Dendritic cell treated with granulocyte-macrophage colony-stimulating factor and Interleukin-4, amounts not matched to agents 40 ng/mL and 50 ng/mL, for 4 days (primary cell): ENCODE measurements at regions of chr16 and their contacts with region 1.

Region 1: DNA sequence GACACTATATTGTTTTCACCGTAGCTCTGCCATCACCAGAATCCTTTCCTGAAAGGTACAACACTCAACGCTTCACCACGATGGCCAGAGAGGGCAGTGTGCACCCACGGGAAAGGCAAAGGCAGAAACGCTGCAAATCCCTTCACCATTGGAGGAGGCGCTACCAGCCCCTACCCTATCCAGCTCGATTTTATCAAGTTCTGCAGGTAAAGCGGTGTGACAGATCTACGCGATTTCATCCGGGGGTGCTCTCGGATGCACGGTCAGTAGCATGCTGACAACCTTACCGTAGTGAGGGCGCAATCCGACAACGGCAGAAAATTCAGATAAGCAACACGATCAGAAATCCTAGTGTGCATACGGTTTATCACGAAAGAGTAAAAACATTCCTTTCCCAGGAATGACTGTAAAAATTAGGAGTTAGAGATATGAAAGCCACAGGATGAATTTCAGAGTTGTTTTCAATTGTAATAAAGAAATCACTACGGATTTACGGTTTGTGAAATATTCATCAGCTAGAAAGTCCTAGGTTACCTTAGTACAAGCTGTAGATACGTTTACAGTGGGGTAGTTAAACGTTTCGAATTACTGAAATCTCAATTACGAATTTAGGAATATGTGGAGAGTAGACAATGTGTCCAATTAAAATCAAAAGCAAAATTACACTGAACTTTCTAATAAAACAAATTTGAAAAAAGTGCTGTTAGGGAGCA is 1.8 kb downstream of the NETO2 start:
- H3K4me3 Mint-ChIP-seq: peak overlapping the region; percentile 78
- H3K27ac Mint-ChIP-seq: peak overlapping the region; percentile 78
- H3K4me1 Mint-ChIP-seq: peaks cover 37% of the 10 kb centered on the region
- H3K27me3 Mint-ChIP-seq: peaks cover 21% of the 10 kb centered on the region

Region 2: DNA sequence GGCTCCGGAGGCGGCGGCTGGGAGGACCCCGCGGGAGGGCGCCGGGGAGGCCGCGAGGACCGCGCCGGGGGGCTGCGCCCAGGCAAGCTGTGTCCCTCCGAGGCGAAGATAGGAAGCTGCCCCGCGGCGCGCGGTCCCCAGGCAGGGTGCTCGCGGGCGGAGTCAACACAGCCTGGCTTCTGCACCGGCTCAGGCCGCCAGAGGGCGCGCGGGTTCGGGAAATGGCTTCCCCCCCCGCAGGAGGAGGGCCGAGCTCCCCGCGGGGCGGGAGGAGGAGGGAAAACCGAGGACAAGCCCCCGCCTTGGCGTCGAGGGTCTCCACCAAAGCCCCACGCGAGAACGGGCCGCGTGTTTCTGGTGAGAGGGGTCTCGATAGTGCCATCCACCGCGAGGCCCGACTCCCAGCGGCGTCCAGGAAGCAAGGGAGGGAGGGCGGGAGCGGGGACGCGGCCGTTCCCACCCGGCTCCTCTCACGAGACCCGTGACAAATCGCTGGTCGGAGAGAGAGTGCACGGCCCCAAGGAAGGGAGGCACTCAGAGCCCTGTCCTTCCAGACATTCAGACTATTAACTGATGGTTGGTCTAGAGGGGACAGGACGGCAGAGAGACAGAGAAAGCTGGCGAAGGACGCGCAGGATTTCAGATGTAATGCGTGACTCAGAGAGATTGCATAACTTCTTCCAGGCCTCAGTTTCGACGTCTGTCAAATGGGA is 104.0 kb before region 1 on chr16:
- intact Hi-C with region 1: loop called (anchors 2 kb)
- H3K4me3 Mint-ChIP-seq: peak overlapping the region; percentile 82
- H3K27ac Mint-ChIP-seq: peak overlapping the region; percentile 82
- H3K4me1 Mint-ChIP-seq: no peaks in the 10 kb centered on the region
- H3K27me3 Mint-ChIP-seq: peaks cover 13% of the 10 kb centered on the region

Region 3: DNA sequence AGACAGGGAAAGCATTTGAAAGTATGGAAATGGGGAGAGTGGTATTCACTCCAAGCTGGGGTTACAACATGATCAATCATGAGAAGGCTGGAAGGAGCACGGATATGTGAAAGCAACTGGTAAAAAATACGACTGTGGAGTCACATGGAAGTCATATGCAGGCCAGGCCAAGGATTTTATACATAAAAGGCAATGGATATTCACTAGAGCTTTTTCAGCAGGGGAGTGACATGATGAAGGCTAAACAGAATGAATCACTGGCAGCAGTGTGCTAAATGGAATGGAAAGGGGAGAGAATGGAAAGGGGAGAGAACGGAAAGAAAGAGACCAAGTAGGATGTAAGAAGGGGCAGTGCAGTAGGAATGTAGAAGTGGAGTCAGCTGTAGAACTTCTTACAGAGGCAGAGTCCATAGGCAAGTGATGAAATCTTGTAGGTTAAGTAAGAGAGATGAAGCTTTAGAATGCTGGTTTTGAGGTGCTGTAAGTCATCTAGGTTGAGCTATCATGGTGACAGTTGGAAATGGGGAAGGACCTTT is 14.8 kb after region 1 on chr16:
- intact Hi-C with region 1: no loop called
- H3K4me3 Mint-ChIP-seq: no peak overlapping the region
- H3K27ac Mint-ChIP-seq: no peak overlapping the region
- H3K4me1 Mint-ChIP-seq: no peaks in the 10 kb centered on the region
- H3K27me3 Mint-ChIP-seq: no peaks in the 10 kb centered on the region

Region 4: GRCh38 chr16:47460711-47461597 is 319.0 kb after region 1 on chr16 and contains the starts of genes ITFG1 and PHKB:
- intact Hi-C with region 1: loop called (anchors 2 kb)
- H3K4me3 Mint-ChIP-seq: peak within 1 kb of the TSS; percentile 92
- H3K27ac Mint-ChIP-seq: peak within 1 kb of the TSS; percentile 96
- H3K4me1 Mint-ChIP-seq: peaks cover 51% of the 10 kb centered on the region
- H3K27me3 Mint-ChIP-seq: no peaks in the 10 kb centered on the region

Region 5: DNA sequence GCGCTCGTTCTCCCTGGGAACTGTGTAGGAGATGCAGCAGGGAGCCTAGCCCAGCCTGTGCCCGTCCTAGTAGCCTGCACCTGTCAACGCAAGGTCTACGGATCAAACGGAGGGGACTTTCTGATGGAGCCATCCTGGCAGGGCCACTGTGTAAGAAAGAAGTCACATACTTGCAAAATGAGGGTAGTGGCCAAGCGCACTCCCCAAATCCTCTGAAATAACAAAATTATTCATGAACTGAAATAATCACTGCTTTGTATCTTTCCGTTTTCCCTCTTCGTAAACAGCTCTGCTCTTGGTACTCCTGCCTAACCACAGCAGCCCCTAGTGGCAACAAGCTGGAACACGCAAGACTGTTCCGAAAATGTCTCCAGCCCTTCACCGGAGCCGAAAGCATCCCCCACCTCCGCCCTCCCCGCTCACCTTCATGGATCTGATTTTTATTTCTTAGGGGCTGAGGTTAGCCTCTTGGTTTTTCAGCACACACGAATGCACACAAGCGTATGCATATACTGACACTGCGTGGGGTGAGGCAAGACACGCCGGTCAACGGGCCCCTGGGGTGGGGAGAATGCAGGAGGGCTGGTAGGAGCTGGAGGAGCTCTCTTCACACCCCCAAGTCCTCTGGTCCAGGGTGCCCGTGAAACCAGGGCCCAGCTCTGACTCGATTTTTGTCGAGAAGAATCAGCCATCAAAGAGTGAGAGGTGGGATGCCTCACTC is 913.1 kb after region 1 on chr16:
- intact Hi-C with region 1: loop called (anchors 10 kb)
- H3K4me3 Mint-ChIP-seq: no peak overlapping the region
- H3K27ac Mint-ChIP-seq: no peak overlapping the region
- H3K4me1 Mint-ChIP-seq: no peaks in the 10 kb centered on the region
- H3K27me3 Mint-ChIP-seq: peaks cover 23% of the 10 kb centered on the region